Naive thymus-derived CD4-positive, alpha-beta T cell (primary cell): ENCODE measurements at regions of chr20 and their contacts with region 1.

Region 1: GRCh38 chr20:10434832-10435812 is at the start of gene SLX4IP:
- DNase-seq: peak; percentile 46 to 85 (median 82)
- ATAC-seq: peak; percentile 76
- H3K4me3 ChIP-seq: peak within 1 kb of the TSS; percentile 99
- H3K4me3 Mint-ChIP-seq: peak within 1 kb of the TSS; percentile 89 to 99 (median 96)
- H3K27ac ChIP-seq: peak within 1 kb of the TSS; percentile 82
- H3K27ac Mint-ChIP-seq: peak within 1 kb of the TSS; percentile 90 to 99 (median 97)
- H3K4me1 ChIP-seq: peaks cover 0 to 4% of the 10 kb centered on the region in 2 donors
- H3K4me1 Mint-ChIP-seq: peaks cover 30 to 59% (median 48%) of the 10 kb centered on the region in 7 donors
- H3K27me3 ChIP-seq: no peaks in the 10 kb centered on the region
- H3K27me3 Mint-ChIP-seq: no peaks in the 10 kb centered on the region
- total RNA-seq, gene SLX4IP: 4.2 to 8.2 (median 6.5) TPM

Region 2: DNA sequence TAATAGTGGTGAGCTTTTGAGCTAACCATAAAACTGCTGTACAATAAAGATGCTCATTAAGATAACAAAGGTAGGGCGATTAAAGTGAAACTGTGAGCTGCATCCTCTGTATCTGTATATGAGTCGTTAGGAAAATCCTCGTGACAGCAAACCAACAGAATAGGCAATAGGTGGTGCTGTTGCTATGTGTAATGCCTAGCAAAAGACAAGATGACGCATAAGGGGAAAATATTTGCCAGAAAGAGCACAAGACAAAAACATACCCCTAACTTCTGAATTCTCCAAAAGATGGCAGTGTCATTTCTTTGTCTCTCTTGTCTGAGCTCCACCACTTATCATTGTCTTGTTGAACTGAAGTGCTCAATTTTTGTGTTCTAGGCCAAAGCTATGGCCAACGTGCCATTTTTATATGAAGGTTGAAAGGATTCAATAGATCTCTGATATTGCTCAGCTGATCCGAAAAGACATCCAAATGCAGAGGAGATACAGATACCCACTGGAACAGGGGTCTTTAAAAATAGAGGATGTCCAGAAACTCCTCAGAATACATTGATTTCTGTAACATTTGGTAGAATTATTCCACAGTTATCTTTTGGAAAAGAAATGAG is 456.6 kb before region 1 on chr20:
- CTCF ChIA-PET with region 1: interaction called, 56 read pairs
- POLR2A ChIA-PET with region 1: no interaction called
- intact Hi-C with region 1: loop called in 1 of 2 experiments (anchors 2 kb)
- DNase-seq: peak in 7 of 9 donors; percentile 46 to 73 (median 60)
- ATAC-seq: peak; percentile 93
- H3K4me3 ChIP-seq: no peak overlapping the region
- H3K4me3 Mint-ChIP-seq: no peak overlapping the region
- H3K27ac ChIP-seq: no peak overlapping the region
- H3K27ac Mint-ChIP-seq: peak overlapping the region in 1 of 9 donors; percentile 73
- H3K4me1 ChIP-seq: no peaks in the 10 kb centered on the region
- H3K4me1 Mint-ChIP-seq: peaks cover 0 to 4% (median 0%) of the 10 kb centered on the region in 7 donors
- H3K27me3 ChIP-seq: no peaks in the 10 kb centered on the region
- H3K27me3 Mint-ChIP-seq: peaks cover 0 to 15% (median 6%) of the 10 kb centered on the region in 5 donors

Region 3: GRCh38 chr20:10219452-10219791 is 215.7 kb before region 1 on chr20:
- CTCF ChIA-PET with region 1: no interaction called
- POLR2A ChIA-PET with region 1: no interaction called
- intact Hi-C with region 1: loop called in 1 of 2 experiments (anchors 1 kb)
- DNase-seq: peak; percentile 25 to 80 (median 51)
- ATAC-seq: peak; percentile 90
- H3K4me3 ChIP-seq: no peak overlapping the region
- H3K4me3 Mint-ChIP-seq: peak overlapping the region in 7 of 10 donors; percentile 20 to 73 (median 67)
- H3K27ac ChIP-seq: no peak overlapping the region
- H3K27ac Mint-ChIP-seq: no peak overlapping the region
- H3K4me1 ChIP-seq: no peaks in the 10 kb centered on the region
- H3K4me1 Mint-ChIP-seq: peaks cover 5 to 25% (median 16%) of the 10 kb centered on the region in 7 donors
- H3K27me3 ChIP-seq: peaks cover 0 to 4% of the 10 kb centered on the region in 2 donors
- H3K27me3 Mint-ChIP-seq: peaks cover 31 to 84% (median 65%) of the 10 kb centered on the region in 5 donors

Region 4: DNA sequence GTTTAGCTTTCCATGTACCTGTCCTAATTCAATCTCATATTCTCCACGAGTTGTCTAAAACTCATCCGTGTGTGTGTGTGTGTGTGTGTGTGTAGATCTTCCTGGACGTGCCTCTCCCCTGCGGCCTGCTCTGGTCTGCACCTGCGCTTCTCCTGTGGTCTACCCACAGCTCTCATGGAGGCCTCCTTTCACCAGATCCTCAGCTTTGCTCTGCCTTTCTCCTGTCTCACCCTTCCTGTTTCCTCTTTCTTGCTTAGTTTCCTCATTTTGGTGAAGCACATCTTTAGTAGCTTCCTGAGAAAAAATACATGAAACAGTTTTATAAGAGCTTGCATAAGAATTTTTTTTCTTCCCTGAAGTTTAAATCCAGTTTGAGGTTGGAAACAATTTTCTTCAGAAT is 18.1 kb after region 1 on chr20:
- CTCF ChIA-PET with region 1: no interaction called
- POLR2A ChIA-PET with region 1: interaction called, 4 read pairs
- intact Hi-C with region 1: loop called in 1 of 2 experiments (anchors 1 kb)
- DNase-seq: peak in 3 of 9 donors; percentile 7 to 32 (median 11)
- ATAC-seq: peak; percentile 82
- H3K4me3 ChIP-seq: no peak overlapping the region
- H3K4me3 Mint-ChIP-seq: peak overlapping the region in 9 of 10 donors; percentile 52 to 74 (median 61)
- H3K27ac ChIP-seq: no peak overlapping the region
- H3K27ac Mint-ChIP-seq: peak overlapping the region; percentile 64 to 93 (median 79)
- H3K4me1 ChIP-seq: peaks cover 0 to 6% of the 10 kb centered on the region in 2 donors
- H3K4me1 Mint-ChIP-seq: peaks cover 17 to 23% (median 21%) of the 10 kb centered on the region in 7 donors
- H3K27me3 ChIP-seq: no peaks in the 10 kb centered on the region
- H3K27me3 Mint-ChIP-seq: no peaks in the 10 kb centered on the region

Region 5: GRCh38 chr20:10519361-10520046 is 84.4 kb after region 1 on chr20:
- CTCF ChIA-PET with region 1: no interaction called
- POLR2A ChIA-PET with region 1: no interaction called
- intact Hi-C with region 1: loop called in 1 of 2 experiments (anchors 5 kb)
- DNase-seq: no peak
- ATAC-seq: peak; percentile 31
- H3K4me3 ChIP-seq: no peak overlapping the region
- H3K4me3 Mint-ChIP-seq: peak overlapping the region in 1 of 10 donors; percentile 54
- H3K27ac ChIP-seq: no peak overlapping the region
- H3K27ac Mint-ChIP-seq: peak overlapping the region in 1 of 9 donors; percentile 81
- H3K4me1 ChIP-seq: peaks cover 0 to 8% of the 10 kb centered on the region in 2 donors
- H3K4me1 Mint-ChIP-seq: peaks cover 12 to 44% (median 33%) of the 10 kb centered on the region in 7 donors
- H3K27me3 ChIP-seq: no peaks in the 10 kb centered on the region
- H3K27me3 Mint-ChIP-seq: no peaks in the 10 kb centered on the region

Region 6: GRCh38 chr20:10673988-10674711 is 239.0 kb after region 1 on chr20 and contains the start of gene JAG1:
- CTCF ChIA-PET with region 1: no interaction called
- POLR2A ChIA-PET with region 1: no interaction called
- intact Hi-C with region 1: loop called in 1 of 2 experiments (anchors 1 kb)
- DNase-seq: peak in 2 of 9 donors; percentile 51 to 86
- ATAC-seq: peak; percentile 74
- H3K4me3 ChIP-seq: peak within 1 kb of the TSS; percentile 30
- H3K4me3 Mint-ChIP-seq: peak within 1 kb of the TSS; percentile 48 to 94 (median 74)
- H3K27ac ChIP-seq: no peak within 1 kb of the TSS
- H3K27ac Mint-ChIP-seq: peak within 1 kb of the TSS in 1 of 9 donors; percentile 82
- H3K4me1 ChIP-seq: no peaks in the 10 kb centered on the region
- H3K4me1 Mint-ChIP-seq: peaks cover 0 to 27% (median 18%) of the 10 kb centered on the region in 7 donors
- H3K27me3 ChIP-seq: peaks cover 11 to 12% of the 10 kb centered on the region in 2 donors
- H3K27me3 Mint-ChIP-seq: peaks cover 59 to 77% (median 59%) of the 10 kb centered on the region in 5 donors
- total RNA-seq, gene JAG1: 0.46 to 7.0 (median 2.6) TPM in 3 of 5 experiments, not detected in the others